CD8-positive, alpha-beta memory T cell (primary cell): ENCODE measurements at regions of chr12 and their contacts with region 1.

Region 1: GRCh38 chr12:56206457-56207166 is 15.1 kb downstream of the RNF41 start:
- DNase-seq: peak in 3 of 5 donors; percentile 12 to 57 (median 14)
- H3K4me3 ChIP-seq: no peak overlapping the region
- H3K4me3 Mint-ChIP-seq: no peak overlapping the region
- H3K27ac ChIP-seq: no peak overlapping the region
- H3K27ac Mint-ChIP-seq: peak overlapping the region in 5 of 8 donors; percentile 4 to 53 (median 39)
- H3K4me1 ChIP-seq: no peaks in the 10 kb centered on the region
- H3K4me1 Mint-ChIP-seq: peaks cover 0 to 8% (median 0%) of the 10 kb centered on the region in 3 donors
- H3K27me3 ChIP-seq: no peaks in the 10 kb centered on the region
- H3K27me3 Mint-ChIP-seq: no peaks in the 10 kb centered on the region

Region 2: DNA sequence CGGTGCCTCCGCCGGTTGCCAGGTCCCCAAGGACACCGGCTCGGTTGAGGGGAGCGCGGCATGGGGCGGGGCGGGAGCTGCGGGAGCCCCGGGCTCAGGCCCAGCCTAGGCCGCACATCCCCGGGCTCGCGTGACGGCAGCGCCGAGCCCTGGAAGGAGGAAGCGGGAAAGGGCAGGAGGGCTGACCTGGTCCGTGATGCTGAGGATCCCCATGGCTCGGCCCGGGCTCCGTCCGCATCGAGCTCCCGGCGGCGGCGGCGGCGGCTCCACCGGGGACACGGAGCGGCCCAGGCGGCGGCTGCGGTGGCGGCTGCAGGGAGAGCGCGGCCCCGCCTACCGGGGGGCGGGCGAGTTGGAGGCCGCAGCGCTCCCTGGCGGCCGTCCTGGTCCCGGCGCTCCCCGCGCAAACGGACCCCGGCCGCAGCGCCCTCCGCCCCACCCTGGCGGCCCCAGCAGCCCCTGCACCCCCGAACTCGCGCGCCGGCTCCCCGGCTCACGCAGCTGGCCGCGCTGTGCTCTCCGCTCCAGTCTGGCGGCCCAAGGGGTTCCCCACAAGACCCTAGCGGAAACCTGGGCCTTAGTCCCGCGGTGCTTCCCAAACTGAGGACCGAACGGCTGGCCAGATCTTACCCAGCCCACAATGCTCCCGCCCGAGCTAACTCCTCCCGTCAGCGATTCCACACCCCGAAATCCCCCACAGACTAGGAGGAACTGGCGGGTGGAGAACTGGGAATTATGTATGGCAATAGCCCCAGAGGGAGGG is 51.6 kb after region 1 on chr12 and contains the start of gene ANKRD52:
- CTCF ChIA-PET with region 1: interaction called, 4 read pairs
- POLR2A ChIA-PET with region 1: interaction called, 11 read pairs
- DNase-seq: peak; percentile 75 to 86 (median 83)
- H3K4me3 ChIP-seq: peak within 1 kb of the TSS; percentile 92
- H3K4me3 Mint-ChIP-seq: peak within 1 kb of the TSS; percentile 90 to 95 (median 91)
- H3K27ac ChIP-seq: peak within 1 kb of the TSS; percentile 86
- H3K27ac Mint-ChIP-seq: peak within 1 kb of the TSS; percentile 81 to 96 (median 92)
- H3K4me1 ChIP-seq: peaks cover 23% of the 10 kb centered on the region
- H3K4me1 Mint-ChIP-seq: peaks cover 25 to 37% (median 29%) of the 10 kb centered on the region in 3 donors
- H3K27me3 ChIP-seq: no peaks in the 10 kb centered on the region
- H3K27me3 Mint-ChIP-seq: no peaks in the 10 kb centered on the region
- total RNA-seq, gene ANKRD52: 67.0 to 69.9 TPM

Region 3: GRCh38 chr12:56377310-56377988 is 170.8 kb after region 1 on chr12:
- CTCF ChIA-PET with region 1: no interaction called
- POLR2A ChIA-PET with region 1: no interaction called
- DNase-seq: no peak
- H3K4me3 ChIP-seq: no peak overlapping the region
- H3K4me3 Mint-ChIP-seq: no peak overlapping the region
- H3K27ac ChIP-seq: peak overlapping the region; percentile 5
- H3K27ac Mint-ChIP-seq: peak overlapping the region in 1 of 8 donors; percentile 29
- H3K4me1 ChIP-seq: no peaks in the 10 kb centered on the region
- H3K4me1 Mint-ChIP-seq: no peaks in the 10 kb centered on the region
- H3K27me3 ChIP-seq: no peaks in the 10 kb centered on the region
- H3K27me3 Mint-ChIP-seq: peaks cover 5% of the 10 kb centered on the region in 2 donors